GM10248 (cell line): ENCODE measurements at regions of chr15 and their contacts with region 1.

Region 1: DNA sequence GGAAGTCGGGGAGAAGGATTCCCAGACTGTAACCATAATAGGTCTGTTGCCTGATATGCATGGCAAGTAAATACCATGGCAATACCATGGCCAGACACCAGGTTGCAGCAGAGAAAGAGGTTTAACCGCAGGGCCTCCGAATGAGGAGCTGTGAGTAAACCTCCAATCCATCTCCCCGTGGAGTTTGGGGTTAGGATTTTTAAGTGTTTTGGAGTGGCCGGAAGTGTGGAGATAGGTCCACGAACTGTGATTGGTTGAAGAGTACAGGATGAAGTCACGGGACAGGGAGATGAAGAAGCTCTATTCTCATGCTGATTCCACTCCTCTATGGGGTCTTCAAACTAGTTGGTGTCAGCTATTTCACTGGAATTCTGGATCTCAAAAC is 127.9 kb downstream of the ST8SIA2 start:
- DNase-seq: peak; percentile 57
- CTCF ChIP-seq: peak; percentile 70

Region 2: DNA sequence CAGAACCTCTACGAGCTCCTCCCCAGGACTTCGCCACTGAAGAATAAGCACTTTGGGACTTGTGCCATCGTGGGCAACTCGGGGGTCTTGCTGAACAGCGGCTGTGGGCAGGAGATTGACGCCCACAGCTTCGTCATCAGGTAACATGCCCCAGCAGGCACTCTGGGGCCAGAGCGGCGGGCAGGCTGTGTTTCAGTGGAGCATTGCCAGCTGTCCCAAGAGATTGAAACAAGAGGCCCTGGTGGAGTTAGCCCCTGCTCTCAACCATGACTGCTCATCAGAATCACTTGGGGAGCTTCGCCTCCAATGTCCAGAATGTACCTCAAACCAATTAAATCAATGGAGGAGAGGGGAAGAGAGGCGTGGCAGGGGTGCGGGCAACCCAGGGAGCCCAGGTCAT is 83.1 kb before region 1 on chr15:
- CTCF ChIA-PET with region 1: no interaction called
- POLR2A ChIA-PET with region 1: no interaction called
- DNase-seq: no peak
- CTCF ChIP-seq: no peak

Region 3: GRCh38 chr15:92510163-92510882 is 11.3 kb before region 1 on chr15:
- CTCF ChIA-PET with region 1: interaction called, 10 read pairs
- POLR2A ChIA-PET with region 1: no interaction called
- DNase-seq: no peak
- CTCF ChIP-seq: no peak

Region 4: DNA sequence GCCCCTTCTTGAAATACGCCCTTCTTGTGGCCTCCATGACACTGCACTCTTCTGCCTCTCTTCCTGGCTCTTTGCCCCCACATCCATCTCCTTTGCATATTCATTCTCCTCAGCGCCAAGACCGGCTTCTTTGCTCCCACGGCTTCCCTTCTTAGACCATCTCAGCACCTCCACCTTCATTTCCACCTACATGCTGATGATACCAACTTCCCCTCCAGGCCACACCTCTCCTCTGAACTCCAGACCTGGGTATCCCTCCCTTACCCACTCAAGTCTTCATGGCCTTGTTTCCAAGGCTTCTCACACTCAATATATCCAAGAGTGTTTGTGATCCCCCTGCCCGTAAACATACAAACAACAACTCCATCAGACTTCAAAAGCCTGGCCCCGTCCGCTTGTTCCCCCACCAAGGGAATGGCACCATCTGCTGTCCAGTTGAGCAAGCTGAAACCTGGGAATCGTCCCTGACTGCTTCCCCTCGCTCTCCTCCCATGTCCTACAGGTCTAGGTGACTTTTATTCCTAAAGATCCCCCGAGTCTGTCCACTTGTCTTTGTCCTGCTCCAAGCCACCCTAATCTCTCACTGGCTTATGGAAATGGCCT is 161.7 kb after region 1 on chr15:
- CTCF ChIA-PET with region 1: interaction called, 21 read pairs
- POLR2A ChIA-PET with region 1: no interaction called
- DNase-seq: no peak
- CTCF ChIP-seq: peak; percentile 43